Gastrocnemius medialis (tissue), 4 donors: ENCODE measurements at regions of chr20 and their contacts with region 1.

Region 1: DNA sequence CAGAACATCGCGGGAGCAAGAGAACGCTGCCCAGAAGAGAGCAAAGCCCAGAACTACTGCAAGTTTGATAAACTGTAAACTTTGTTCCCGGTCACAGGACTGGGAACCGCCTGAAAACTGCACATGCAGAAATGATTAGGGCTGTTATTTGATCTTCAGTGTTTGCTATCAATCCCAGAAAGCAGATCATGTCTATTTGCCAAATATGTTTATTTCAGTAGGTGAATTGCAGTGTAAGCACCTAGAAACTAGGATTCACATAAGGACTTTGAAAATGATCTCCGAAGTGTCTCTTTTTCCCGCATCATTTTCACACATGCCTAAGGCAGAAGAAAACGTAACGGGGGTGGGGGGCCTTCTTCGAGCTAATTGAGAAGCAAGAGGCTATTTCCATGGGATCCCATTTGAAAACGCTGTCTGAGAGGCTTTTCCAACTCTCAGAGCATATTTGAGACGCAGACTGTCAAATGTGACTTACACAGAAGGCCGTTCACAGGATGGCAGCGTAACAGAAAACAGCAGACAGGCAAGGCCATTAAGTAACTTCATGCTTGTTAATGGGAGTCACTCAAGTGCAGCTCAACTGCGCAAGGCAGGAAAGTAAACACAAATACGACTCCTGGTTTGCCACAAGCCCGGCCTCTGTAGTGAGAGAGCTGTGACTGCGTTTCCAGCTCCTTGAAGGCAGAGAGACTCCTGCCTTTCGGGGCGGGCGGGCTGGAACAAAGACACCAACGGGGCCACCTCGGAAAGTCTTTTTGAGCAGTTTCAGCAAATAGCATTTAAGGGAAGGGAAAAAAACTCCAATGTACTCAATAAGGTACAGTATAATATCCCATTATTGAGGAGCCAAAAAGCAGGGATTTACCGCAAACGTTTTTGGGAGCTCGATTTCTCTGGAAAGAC is 144.7 kb upstream of the ZNF217 start:
- DNase-seq: peak; percentile 68 to 82
- ATAC-seq: peak; percentile 95 to 98
- H3K4me3 ChIP-seq: peak overlapping the region in 3 of 4 donors; percentile 16 to 28 (median 24)
- H3K27ac ChIP-seq: peak overlapping the region; percentile 10 to 71 (median 71)
- H3K4me1 ChIP-seq: peaks cover 4 to 28% of the 10 kb centered on the region in 2 donors
- H3K27me3 ChIP-seq: no peaks in the 10 kb centered on the region
- CTCF ChIP-seq: no peak
- POLR2A ChIP-seq: peak in 1 of 2 donors; percentile 54

Region 2: GRCh38 chr20:53346341-53346660 is 392.0 kb before region 1 on chr20:
- in situ Hi-C with region 1: no loop called
- intact Hi-C with region 1: no loop called
- DNase-seq: no peak
- ATAC-seq: no peak
- H3K4me3 ChIP-seq: no peak overlapping the region
- H3K27ac ChIP-seq: no peak overlapping the region
- H3K4me1 ChIP-seq: no peaks in the 10 kb centered on the region
- H3K27me3 ChIP-seq: no peaks in the 10 kb centered on the region
- CTCF ChIP-seq: no peak
- POLR2A ChIP-seq: no peak

Region 3: GRCh38 chr20:53652090-53652858 is 86.0 kb before region 1 on chr20:
- in situ Hi-C with region 1: no loop called
- intact Hi-C with region 1: loop called (anchors 10 kb)
- DNase-seq: no peak
- ATAC-seq: peak; percentile 92 to 97
- H3K4me3 ChIP-seq: peak overlapping the region in 3 of 4 donors; percentile 19 to 32 (median 26)
- H3K27ac ChIP-seq: peak overlapping the region; percentile 56 to 78 (median 74)
- H3K4me1 ChIP-seq: peaks cover 9 to 19% of the 10 kb centered on the region in 2 donors
- H3K27me3 ChIP-seq: no peaks in the 10 kb centered on the region
- CTCF ChIP-seq: no peak
- POLR2A ChIP-seq: no peak

Region 4: DNA sequence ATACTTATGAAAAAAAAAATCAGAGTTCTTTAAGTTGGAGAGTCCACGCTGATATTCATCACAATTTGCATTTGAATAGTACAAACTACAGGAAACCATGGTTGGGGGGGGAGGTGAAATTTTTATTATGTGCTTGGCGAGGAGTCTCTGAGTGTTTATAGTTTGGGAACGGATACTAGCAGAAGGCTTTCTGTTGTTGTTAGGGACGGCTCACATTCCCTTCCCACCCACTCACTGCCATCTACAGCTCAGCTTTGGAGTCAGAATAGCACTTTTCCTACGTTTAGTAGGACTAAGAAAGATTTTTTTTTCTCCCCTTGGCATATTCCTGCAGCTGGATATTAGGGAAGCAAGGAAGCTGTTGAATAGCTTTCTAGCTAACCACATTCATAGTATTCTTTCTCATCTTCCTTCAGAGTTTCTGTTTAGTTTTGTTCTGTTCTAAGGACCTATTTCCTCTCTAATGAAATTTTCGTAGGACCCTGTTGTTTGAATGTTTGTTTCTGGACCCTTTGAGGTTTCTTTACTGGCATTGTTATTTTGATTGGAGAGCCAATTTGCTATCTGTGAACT is 90.5 kb after region 1 on chr20:
- in situ Hi-C with region 1: no loop called
- intact Hi-C with region 1: loop called (anchors 1 kb)
- DNase-seq: peak in 1 of 2 donors; percentile 30
- ATAC-seq: peak; percentile 69 to 75
- H3K4me3 ChIP-seq: peak overlapping the region; percentile 18 to 53 (median 32)
- H3K27ac ChIP-seq: peak overlapping the region; percentile 73 to 81 (median 77)
- H3K4me1 ChIP-seq: peaks cover 20 to 36% of the 10 kb centered on the region in 2 donors
- H3K27me3 ChIP-seq: no peaks in the 10 kb centered on the region
- CTCF ChIP-seq: no peak
- POLR2A ChIP-seq: peak in 1 of 2 donors; percentile 3

Region 5: DNA sequence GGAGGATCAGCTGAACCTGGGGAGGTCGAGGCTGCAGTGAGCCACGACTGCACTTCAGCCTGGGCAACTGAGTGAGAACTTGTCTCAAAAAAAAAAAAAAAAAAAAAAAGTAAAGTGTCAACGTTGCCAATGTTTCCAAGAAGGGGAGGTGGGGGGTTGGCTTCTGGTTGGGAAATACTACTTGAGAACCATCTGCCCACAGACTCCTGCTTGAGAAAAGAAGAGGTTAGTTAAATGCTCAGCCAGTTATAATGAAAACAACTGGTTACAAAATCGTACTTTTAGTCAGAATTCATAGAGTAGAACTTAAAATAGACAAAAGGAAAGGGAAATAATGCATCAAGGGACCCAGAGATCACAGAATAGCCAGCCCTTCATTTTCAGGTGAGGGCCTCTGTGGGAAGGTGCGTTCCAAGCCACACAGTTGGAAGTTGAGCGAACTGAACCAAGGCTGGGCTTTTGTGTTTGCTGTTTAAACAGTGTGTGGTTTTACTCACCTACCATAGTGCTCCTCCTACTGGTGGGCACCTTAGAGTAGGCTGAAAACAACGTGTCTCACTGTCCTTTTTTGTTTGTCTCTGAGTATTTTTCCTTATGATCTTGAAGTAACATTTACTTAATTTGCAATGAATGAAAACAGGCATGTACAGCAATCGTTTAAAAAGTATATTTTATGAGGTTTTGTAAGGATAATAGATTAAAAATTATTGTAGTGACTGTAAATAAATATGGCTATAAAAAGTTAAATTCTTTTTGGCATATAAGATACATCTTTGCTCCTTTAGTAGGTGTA is 131.4 kb after region 1 on chr20:
- in situ Hi-C with region 1: no loop called
- intact Hi-C with region 1: loop called (anchors 5 kb)
- DNase-seq: peak; percentile 33 to 38
- ATAC-seq: peak; percentile 80 to 95
- H3K4me3 ChIP-seq: no peak overlapping the region
- H3K27ac ChIP-seq: peak overlapping the region in 2 of 4 donors; percentile 13 to 45
- H3K4me1 ChIP-seq: peaks cover 5 to 23% of the 10 kb centered on the region in 2 donors
- H3K27me3 ChIP-seq: no peaks in the 10 kb centered on the region
- CTCF ChIP-seq: peak; percentile 42 to 74 (median 62)
- POLR2A ChIP-seq: no peak

Region 6: GRCh38 chr20:53915446-53916172 is 177.3 kb after region 1 on chr20:
- in situ Hi-C with region 1: no loop called
- intact Hi-C with region 1: loop called (anchors 10 kb)
- DNase-seq: peak; percentile 84 to 90
- ATAC-seq: peak; percentile 92 to 94
- H3K4me3 ChIP-seq: peak overlapping the region; percentile 67 to 73 (median 71)
- H3K27ac ChIP-seq: peak overlapping the region; percentile 63 to 88 (median 81)
- H3K4me1 ChIP-seq: peaks cover 4 to 28% of the 10 kb centered on the region in 2 donors
- H3K27me3 ChIP-seq: no peaks in the 10 kb centered on the region
- CTCF ChIP-seq: peak; percentile 80 to 95 (median 87)
- POLR2A ChIP-seq: no peak